ENCODE measurements at regions of chr12 and their contacts with region 1.

Region 1: DNA sequence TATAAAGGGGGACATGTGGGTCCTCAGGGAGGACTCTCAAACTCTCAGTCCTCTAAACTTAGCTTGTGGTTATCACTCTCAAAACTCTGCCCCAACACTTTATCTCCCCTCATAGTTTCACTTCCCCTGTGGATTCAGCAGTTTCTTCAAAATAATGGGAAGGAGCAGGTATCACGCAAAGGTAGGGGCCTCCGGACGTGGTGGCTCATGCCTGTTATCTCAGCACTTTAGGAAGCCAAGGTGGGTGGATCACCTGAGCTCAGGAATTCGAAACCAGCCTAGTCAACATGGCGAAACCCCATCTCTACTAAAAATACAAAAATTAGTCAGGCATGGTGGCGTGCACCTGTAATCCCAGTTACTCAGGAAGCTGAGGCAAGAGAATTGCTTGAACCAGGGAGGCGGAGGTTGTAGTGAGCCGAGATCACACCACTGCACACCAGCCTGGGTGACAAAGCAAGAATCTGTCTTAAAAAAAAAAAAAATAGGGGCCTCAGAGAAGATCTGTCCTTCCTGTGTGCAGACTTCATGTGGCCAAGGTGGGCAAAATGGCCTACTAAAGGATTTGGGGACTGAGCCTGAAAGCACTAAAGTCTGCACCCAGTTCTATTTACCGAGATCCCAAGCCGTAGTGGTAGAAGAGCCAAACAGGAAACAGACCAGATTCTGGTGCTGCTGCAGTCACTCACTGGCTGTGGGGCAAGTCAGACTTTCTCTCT is 6.4 kb downstream of the ITGB7 start:
- DNase-seq: peak; percentile 71
- ATAC-seq: peak; percentile 59
- H3K4me3 ChIP-seq: peak overlapping the region in 3 of 5 experiments; percentile 17 to 54 (median 23)
- H3K4me3 Mint-ChIP-seq: peak overlapping the region; percentile 70
- H3K27ac ChIP-seq: peak overlapping the region; percentile 39 to 58
- H3K27ac Mint-ChIP-seq: peak overlapping the region; percentile 80
- H3K4me1 ChIP-seq: peaks cover 79 to 86% of the 10 kb centered on the region in 2 donors
- H3K4me1 Mint-ChIP-seq: peaks cover 68% of the 10 kb centered on the region
- H3K27me3 ChIP-seq: no peaks in the 10 kb centered on the region
- H3K27me3 Mint-ChIP-seq: no peaks in the 10 kb centered on the region
- CTCF ChIP-seq: no peak

Region 2: DNA sequence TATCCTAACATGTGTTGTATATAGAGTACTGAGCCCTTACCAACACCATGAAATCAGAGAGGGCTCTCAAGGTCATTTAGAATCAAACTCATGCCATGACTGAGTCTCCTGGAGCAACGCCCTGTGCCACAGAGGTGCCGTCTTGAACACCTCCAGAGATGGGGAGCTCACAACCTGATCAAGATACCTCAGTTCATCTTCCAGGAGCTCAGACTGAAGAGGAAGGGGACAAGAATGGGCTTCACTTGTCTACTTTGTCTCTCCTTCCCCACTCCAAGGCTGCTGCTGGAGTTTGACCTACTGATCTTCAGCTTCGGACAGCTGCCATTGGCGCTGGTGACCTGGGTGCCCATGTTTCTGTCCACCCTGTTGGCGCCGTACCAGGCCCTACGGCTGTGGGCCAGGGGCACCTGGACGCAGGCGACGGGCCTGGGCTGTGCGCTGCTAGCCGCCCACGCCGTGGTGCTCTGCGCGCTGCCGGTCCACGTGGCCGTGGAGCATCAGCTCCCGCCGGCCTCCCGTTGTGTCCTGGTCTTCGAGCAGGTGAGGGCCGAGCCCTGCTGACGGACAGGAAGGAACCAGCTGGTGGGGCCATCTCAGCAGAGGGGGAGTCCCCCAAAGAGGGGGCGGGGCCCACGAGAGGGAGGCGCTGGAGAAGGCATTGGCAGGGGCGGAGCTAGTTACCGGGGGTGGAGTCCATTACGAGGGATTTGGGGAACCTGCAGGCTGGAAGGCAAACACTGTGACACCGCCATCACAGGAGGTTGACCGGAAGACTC is 85.3 kb before region 1 on chr12:
- CTCF ChIA-PET with region 1: no interaction called
- POLR2A ChIA-PET with region 1: no interaction called
- intact Hi-C with region 1: no loop called
- DNase-seq: no peak
- ATAC-seq: no peak
- H3K4me3 ChIP-seq: no peak overlapping the region
- H3K4me3 Mint-ChIP-seq: no peak overlapping the region
- H3K27ac ChIP-seq: no peak overlapping the region
- H3K27ac Mint-ChIP-seq: no peak overlapping the region
- H3K4me1 ChIP-seq: no peaks in the 10 kb centered on the region
- H3K4me1 Mint-ChIP-seq: no peaks in the 10 kb centered on the region
- H3K27me3 ChIP-seq: no peaks in the 10 kb centered on the region
- H3K27me3 Mint-ChIP-seq: peaks cover 4% of the 10 kb centered on the region
- CTCF ChIP-seq: no peak

Region 3: DNA sequence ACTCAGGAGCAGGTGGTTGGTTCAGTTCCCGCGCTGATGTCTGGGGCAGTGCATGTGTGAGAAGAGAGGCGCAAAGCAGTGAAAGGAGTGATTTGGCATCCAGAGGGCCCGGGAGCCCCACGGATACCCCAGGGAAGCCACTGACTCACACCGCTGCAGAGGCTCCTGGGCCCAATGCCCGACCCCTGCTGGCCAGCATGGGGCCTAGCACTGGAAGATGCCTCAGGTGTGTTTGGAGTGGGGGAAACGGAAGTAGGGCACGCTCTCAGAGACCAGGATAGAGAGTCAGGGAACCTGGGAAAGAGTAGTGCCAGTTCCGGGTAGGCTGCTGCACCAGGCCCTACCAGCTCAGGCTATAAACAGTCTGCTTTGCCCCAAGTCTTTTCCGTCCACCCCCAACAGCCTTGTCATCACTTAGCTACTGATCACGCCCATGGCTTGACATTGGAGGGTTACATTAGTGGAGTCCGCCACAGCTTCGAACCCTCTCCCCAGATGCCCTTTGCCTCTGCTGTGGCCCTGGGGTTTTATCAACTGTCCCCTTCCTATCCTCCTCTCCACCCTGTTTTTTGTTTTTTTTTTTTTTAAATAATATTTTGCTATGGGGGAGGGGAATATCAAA is 10.4 kb before region 1 on chr12:
- CTCF ChIA-PET with region 1: interaction called, 44 read pairs
- POLR2A ChIA-PET with region 1: interaction called, 5 read pairs
- intact Hi-C with region 1: no loop called
- DNase-seq: peak; percentile 57
- ATAC-seq: peak; percentile 88
- H3K4me3 ChIP-seq: no peak overlapping the region
- H3K4me3 Mint-ChIP-seq: no peak overlapping the region
- H3K27ac ChIP-seq: no peak overlapping the region
- H3K27ac Mint-ChIP-seq: peak overlapping the region; percentile 56
- H3K4me1 ChIP-seq: no peaks in the 10 kb centered on the region
- H3K4me1 Mint-ChIP-seq: peaks cover 12% of the 10 kb centered on the region
- H3K27me3 ChIP-seq: no peaks in the 10 kb centered on the region
- H3K27me3 Mint-ChIP-seq: no peaks in the 10 kb centered on the region
- CTCF ChIP-seq: peak; percentile 69

Region 4: GRCh38 chr12:53287741-53288216 is 87.2 kb after region 1 on chr12:
- CTCF ChIA-PET with region 1: interaction called, 721 read pairs
- POLR2A ChIA-PET with region 1: interaction called, 3 read pairs
- intact Hi-C with region 1: no loop called
- DNase-seq: peak; percentile 85
- ATAC-seq: peak; percentile 96
- H3K4me3 ChIP-seq: no peak overlapping the region
- H3K4me3 Mint-ChIP-seq: no peak overlapping the region
- H3K27ac ChIP-seq: no peak overlapping the region
- H3K27ac Mint-ChIP-seq: peak overlapping the region; percentile 28
- H3K4me1 ChIP-seq: no peaks in the 10 kb centered on the region
- H3K4me1 Mint-ChIP-seq: peaks cover 5% of the 10 kb centered on the region
- H3K27me3 ChIP-seq: no peaks in the 10 kb centered on the region
- H3K27me3 Mint-ChIP-seq: no peaks in the 10 kb centered on the region
- CTCF ChIP-seq: peak; percentile 82

Region 5: GRCh38 chr12:53295070-53295890 is 94.7 kb after region 1 on chr12 and contains the start of gene PFDN5:
- CTCF ChIA-PET with region 1: interaction called, 721 read pairs
- POLR2A ChIA-PET with region 1: interaction called, 8 read pairs
- intact Hi-C with region 1: no loop called
- DNase-seq: peak; percentile 92
- ATAC-seq: peak; percentile 90
- H3K4me3 ChIP-seq: peak within 1 kb of the TSS; percentile 64 to 96 (median 82)
- H3K4me3 Mint-ChIP-seq: peak within 1 kb of the TSS; percentile 100
- H3K27ac ChIP-seq: peak within 1 kb of the TSS; percentile 69 to 86
- H3K27ac Mint-ChIP-seq: peak within 1 kb of the TSS; percentile 99
- H3K4me1 ChIP-seq: peaks cover 26 to 39% of the 10 kb centered on the region in 2 donors
- H3K4me1 Mint-ChIP-seq: peaks cover 50% of the 10 kb centered on the region
- H3K27me3 ChIP-seq: no peaks in the 10 kb centered on the region
- H3K27me3 Mint-ChIP-seq: no peaks in the 10 kb centered on the region
- CTCF ChIP-seq: no peak
- total RNA-seq, gene PFDN5: 627 and 654 TPM in 2 replicates

Region 6: GRCh38 chr12:53476769-53477209 is 276.2 kb after region 1 on chr12:
- CTCF ChIA-PET with region 1: no interaction called
- POLR2A ChIA-PET with region 1: no interaction called
- intact Hi-C with region 1: no loop called
- DNase-seq: peak; percentile 39
- ATAC-seq: no peak
- H3K4me3 ChIP-seq: no peak overlapping the region
- H3K4me3 Mint-ChIP-seq: no peak overlapping the region
- H3K27ac ChIP-seq: no peak overlapping the region
- H3K27ac Mint-ChIP-seq: peak overlapping the region; percentile 26
- H3K4me1 ChIP-seq: no peaks in the 10 kb centered on the region
- H3K4me1 Mint-ChIP-seq: peaks cover 3% of the 10 kb centered on the region
- H3K27me3 ChIP-seq: no peaks in the 10 kb centered on the region
- H3K27me3 Mint-ChIP-seq: no peaks in the 10 kb centered on the region
- CTCF ChIP-seq: peak; percentile 31

Region 7: GRCh38 chr12:54126696-54127537 is 926.3 kb after region 1 on chr12:
- CTCF ChIA-PET with region 1: no interaction called
- POLR2A ChIA-PET with region 1: no interaction called
- intact Hi-C with region 1: no loop called
- DNase-seq: peak; percentile 45
- ATAC-seq: peak; percentile 51
- H3K4me3 ChIP-seq: peak overlapping the region in 4 of 5 experiments; percentile 13 to 57 (median 42)
- H3K4me3 Mint-ChIP-seq: peak overlapping the region; percentile 77
- H3K27ac ChIP-seq: no peak overlapping the region
- H3K27ac Mint-ChIP-seq: no peak overlapping the region
- H3K4me1 ChIP-seq: peaks cover 18 to 22% of the 10 kb centered on the region in 2 donors
- H3K4me1 Mint-ChIP-seq: peaks cover 16% of the 10 kb centered on the region
- H3K27me3 ChIP-seq: peaks cover 0 to 55% (median 26%) of the 10 kb centered on the region in 4 experiments
- H3K27me3 Mint-ChIP-seq: peaks cover 67% of the 10 kb centered on the region
- CTCF ChIP-seq: no peak

Measured in B cell (primary cell).